Caco-2 (cell line): ENCODE measurements at regions of chr1 and their contacts with region 1.

Region 1: GRCh38 chr1:33080885-33081553 is at the start of gene AZIN2:
- DNase-seq: peak; percentile 94 to 95
- H3K4me3 ChIP-seq: peak within 1 kb of the TSS; percentile 54
- H3K4me3 Mint-ChIP-seq: peak within 1 kb of the TSS; percentile 66
- H3K27ac Mint-ChIP-seq: peak within 1 kb of the TSS; percentile 66
- H3K4me1 ChIP-seq: no peaks in the 10 kb centered on the region
- H3K4me1 Mint-ChIP-seq: peaks cover 6% of the 10 kb centered on the region
- H3K27me3 ChIP-seq: no peaks in the 10 kb centered on the region
- H3K27me3 Mint-ChIP-seq: peaks cover 5% of the 10 kb centered on the region
- CTCF ChIP-seq: no peak
- total RNA-seq, gene AZIN2: 1.5 and 2.3 TPM in 2 replicates

Region 2: DNA sequence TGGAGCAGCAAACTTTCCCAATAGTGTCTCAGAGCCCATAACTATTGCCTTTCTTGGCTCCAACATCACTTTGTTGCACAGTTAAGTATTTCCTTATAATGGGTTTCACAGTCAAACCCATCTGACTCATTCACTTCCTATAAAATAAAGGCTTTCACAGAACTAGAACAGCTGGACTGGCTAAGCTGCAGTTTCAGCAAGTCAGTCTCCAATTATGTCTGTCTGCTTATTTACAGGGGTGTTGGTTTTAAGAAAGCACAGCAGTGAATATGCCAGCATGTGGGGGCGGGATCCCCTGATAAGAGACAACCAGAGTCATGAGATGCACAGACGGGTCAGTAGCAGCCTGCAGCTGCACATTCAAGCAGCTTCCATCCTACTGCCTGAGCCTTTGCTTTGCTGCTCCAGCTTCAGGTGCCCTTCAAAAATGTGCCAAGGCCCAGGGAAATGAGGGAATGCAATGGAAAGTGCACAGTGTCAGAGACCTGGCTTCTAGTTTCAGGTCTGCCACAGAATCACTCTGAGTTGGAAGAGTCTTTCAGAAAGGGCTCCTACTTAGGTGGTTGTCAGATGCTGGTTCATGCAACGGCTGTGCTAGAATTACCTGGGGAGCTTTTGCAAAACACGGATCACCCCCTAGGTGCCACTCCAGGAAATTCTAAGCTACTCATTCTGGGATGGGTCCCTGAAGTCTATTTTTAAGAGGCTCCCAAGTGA is 141.2 kb before region 1 on chr1:
- CTCF ChIA-PET with region 1: no interaction called
- POLR2A ChIA-PET with region 1: no interaction called
- intact Hi-C with region 1: loop called (anchors 10 kb)
- DNase-seq: no peak
- H3K4me3 ChIP-seq: no peak overlapping the region
- H3K4me3 Mint-ChIP-seq: no peak overlapping the region
- H3K27ac Mint-ChIP-seq: no peak overlapping the region
- H3K4me1 ChIP-seq: peaks cover 9% of the 10 kb centered on the region; the same call in 1 of the 2 replicates
- H3K4me1 Mint-ChIP-seq: peaks cover 11% of the 10 kb centered on the region
- H3K27me3 ChIP-seq: no peaks in the 10 kb centered on the region
- H3K27me3 Mint-ChIP-seq: no peaks in the 10 kb centered on the region
- CTCF ChIP-seq: no peak

Region 3: DNA sequence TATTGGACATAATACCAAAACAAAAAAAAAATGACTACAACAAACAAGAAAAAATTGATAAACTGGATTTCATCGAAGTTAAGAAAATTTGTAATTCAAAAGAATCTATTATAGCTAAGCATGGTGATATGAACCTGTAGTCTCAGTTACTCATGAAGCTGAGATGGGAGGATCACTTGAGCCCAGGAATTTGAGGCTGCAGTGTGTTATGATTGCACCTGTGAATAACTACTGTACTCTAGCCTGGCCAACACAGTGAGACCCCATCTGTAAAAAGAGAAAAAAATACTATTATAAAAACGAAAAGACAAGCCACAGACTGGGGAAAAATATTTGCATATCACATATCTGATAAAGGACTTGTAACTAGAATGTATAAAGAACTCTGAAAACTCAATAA is 125.3 kb after region 1 on chr1:
- CTCF ChIA-PET with region 1: no interaction called
- POLR2A ChIA-PET with region 1: no interaction called
- intact Hi-C with region 1: no loop called
- DNase-seq: no peak
- H3K4me3 ChIP-seq: no peak overlapping the region
- H3K4me3 Mint-ChIP-seq: no peak overlapping the region
- H3K27ac Mint-ChIP-seq: no peak overlapping the region
- H3K4me1 ChIP-seq: no peaks in the 10 kb centered on the region
- H3K4me1 Mint-ChIP-seq: no peaks in the 10 kb centered on the region
- H3K27me3 ChIP-seq: no peaks in the 10 kb centered on the region
- H3K27me3 Mint-ChIP-seq: peaks cover 14% of the 10 kb centered on the region
- CTCF ChIP-seq: no peak